ENCODE measurements at regions of chr7 and their contacts with region 1.

Region 1: GRCh38 chr7:140810830-140811556 is 113.7 kb downstream of the BRAF start:
- DNase-seq: peak in 4 of 5 donors; percentile 51 to 87 (median 78)
- H3K4me3 ChIP-seq: no peak overlapping the region
- H3K27ac ChIP-seq: no peak overlapping the region
- H3K4me1 ChIP-seq: no peaks in the 10 kb centered on the region
- H3K27me3 ChIP-seq: no peaks in the 10 kb centered on the region
- CTCF ChIP-seq: peak; percentile 72

Region 2: DNA sequence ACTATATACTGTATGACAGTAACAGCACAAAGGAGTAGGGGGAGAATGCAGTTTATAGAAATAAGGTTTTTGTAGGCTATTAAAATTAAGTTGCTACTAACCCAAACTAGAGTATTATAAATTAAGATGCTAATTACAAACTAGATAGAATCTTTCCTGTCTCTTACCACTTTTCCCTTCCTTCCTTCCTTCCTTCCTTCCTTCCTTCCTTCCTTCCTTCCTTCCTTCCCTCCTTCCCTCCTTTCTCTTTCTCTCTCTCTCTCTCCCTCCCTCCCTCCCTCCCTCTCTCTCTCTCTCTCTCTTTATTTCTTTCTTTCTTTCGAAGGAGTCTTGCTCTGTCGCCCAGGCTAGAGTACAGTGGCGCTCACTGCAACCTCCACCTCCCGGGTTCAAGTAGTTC is 150.1 kb after region 1 on chr7:
- intact Hi-C with region 1: no loop called
- DNase-seq: no peak
- H3K4me3 ChIP-seq: no peak overlapping the region
- H3K27ac ChIP-seq: no peak overlapping the region
- H3K4me1 ChIP-seq: no peaks in the 10 kb centered on the region
- H3K27me3 ChIP-seq: no peaks in the 10 kb centered on the region
- CTCF ChIP-seq: no peak

Region 3: GRCh38 chr7:140972876-140973859 is 162.2 kb after region 1 on chr7:
- intact Hi-C with region 1: no loop called
- DNase-seq: no peak
- H3K4me3 ChIP-seq: no peak overlapping the region
- H3K27ac ChIP-seq: no peak overlapping the region
- H3K4me1 ChIP-seq: peaks cover 0 to 4% (median 0%) of the 10 kb centered on the region in 3 donors
- H3K27me3 ChIP-seq: no peaks in the 10 kb centered on the region
- CTCF ChIP-seq: no peak

Region 4: DNA sequence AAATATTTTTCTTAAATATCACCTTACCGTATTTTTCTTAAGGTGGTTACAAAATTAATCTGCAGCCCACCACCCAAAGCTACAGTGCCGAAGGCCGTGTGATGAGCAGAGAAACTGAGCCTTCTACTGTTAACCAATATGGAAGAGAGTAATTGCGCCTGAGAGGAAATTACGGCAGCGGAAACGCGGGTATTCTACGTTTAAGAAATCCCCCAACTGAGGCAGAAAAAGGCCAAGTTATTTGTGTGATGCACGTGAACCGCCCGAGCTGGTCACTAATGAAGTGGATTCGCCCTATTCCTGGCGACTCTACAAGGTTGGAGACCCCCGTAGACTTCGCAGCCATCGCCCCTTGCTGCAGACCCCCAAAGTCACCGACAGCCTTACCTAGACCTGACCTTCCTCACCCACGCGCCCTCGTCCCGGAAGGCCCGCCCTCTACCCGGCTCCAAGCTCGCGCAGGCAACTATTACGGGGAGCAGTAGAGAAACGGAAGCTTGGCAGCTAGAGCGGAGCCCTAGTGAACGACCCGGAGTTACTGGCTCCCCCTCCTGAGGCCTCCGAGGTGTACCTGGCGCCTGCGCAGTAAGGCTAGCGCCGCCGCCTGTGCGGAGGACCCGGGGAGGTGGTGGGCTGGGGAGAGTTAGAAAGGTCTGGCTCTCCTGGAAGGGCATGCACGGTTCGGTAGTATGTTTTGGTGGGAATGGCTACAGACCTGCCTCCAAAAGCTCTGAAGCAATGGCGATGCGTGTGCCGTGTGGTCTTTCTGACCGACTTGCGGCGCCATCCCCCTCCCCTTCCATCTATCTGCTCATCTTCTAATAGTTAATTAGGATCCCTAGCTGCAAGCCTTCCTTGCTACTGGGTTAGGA is 203.8 kb after region 1 on chr7 and contains the start of gene MRPS33:
- intact Hi-C with region 1: loop called (anchors 10 kb)
- DNase-seq: peak; percentile 97 to 99 (median 98)
- H3K4me3 ChIP-seq: peak within 1 kb of the TSS; percentile 86 to 93 (median 92)
- H3K27ac ChIP-seq: peak within 1 kb of the TSS; percentile 90 to 92
- H3K4me1 ChIP-seq: peaks cover 0 to 5% (median 3%) of the 10 kb centered on the region in 3 donors
- H3K27me3 ChIP-seq: no peaks in the 10 kb centered on the region
- CTCF ChIP-seq: peak; percentile 50
- total RNA-seq, gene MRPS33: 43.6 TPM

Measured in kidney (tissue), 22 donors.